CD8-positive, alpha-beta T cell (primary cell): ENCODE measurements at regions of chr20 and their contacts with region 1.

Region 1: GRCh38 chr20:44532259-44532980 is 10.6 kb upstream of the SERINC3 start:
- DNase-seq: no peak
- ATAC-seq: peak; percentile 13
- H3K4me3 ChIP-seq: peak overlapping the region; percentile 53 to 69
- H3K4me3 Mint-ChIP-seq: no peak overlapping the region
- H3K27ac ChIP-seq: peak overlapping the region; percentile 31 to 66
- H3K27ac Mint-ChIP-seq: no peak overlapping the region
- H3K4me1 ChIP-seq: peaks cover 28% of the 10 kb centered on the region
- H3K4me1 Mint-ChIP-seq: peaks cover 7% of the 10 kb centered on the region
- H3K27me3 ChIP-seq: peaks cover 0 to 3% of the 10 kb centered on the region in 2 experiments
- H3K27me3 Mint-ChIP-seq: no peaks in the 10 kb centered on the region
- CTCF ChIP-seq: no peak

Region 2: DNA sequence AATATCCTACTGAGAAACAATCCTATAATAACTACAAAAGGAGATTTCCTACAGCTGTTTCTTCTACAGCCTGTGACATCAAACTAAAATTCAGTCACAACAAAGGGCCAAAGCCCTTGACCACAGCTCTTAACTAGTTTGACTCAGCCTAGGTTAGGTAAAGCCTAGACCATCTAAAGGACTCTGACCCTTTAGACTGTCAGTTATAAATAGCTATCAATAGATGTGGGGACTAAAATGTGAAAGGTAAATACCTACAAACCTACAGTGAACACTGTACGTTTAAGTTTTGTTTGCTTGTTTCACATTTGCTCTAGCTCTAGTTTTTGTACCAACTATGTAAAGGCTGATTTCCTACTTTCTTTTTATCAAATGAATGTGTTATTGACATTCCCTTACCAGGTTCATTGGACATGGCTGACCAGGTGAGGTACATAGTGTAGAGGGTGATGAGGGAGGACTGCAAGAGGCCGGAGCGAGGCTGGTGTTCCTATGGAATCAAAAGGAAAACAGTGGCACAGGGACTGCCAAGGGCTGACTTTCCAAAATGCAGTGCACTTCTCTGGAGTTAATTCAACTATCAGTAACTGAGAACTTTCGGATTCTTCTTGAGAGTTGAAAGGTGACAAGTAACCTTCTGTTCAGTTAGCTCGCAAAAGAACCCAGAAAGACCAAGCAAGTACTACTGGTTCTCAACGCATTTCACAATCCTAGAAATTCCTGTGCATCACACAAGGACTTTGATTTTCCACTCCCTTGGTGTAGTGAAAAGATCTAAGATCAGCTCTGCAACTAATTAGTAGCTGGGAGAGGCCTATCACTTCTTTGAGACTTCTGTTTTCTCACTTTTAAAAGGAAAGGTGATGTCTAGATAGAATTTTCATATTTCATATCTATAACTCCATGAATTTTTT is 27.8 kb before region 1 on chr20:
- CTCF ChIA-PET with region 1: no interaction called
- POLR2A ChIA-PET with region 1: no interaction called
- intact Hi-C with region 1: no loop called
- DNase-seq: no peak
- ATAC-seq: no peak
- H3K4me3 ChIP-seq: no peak overlapping the region
- H3K4me3 Mint-ChIP-seq: no peak overlapping the region
- H3K27ac ChIP-seq: no peak overlapping the region
- H3K27ac Mint-ChIP-seq: no peak overlapping the region
- H3K4me1 ChIP-seq: no peaks in the 10 kb centered on the region
- H3K4me1 Mint-ChIP-seq: no peaks in the 10 kb centered on the region
- H3K27me3 ChIP-seq: no peaks in the 10 kb centered on the region
- H3K27me3 Mint-ChIP-seq: no peaks in the 10 kb centered on the region
- CTCF ChIP-seq: no peak

Region 3: DNA sequence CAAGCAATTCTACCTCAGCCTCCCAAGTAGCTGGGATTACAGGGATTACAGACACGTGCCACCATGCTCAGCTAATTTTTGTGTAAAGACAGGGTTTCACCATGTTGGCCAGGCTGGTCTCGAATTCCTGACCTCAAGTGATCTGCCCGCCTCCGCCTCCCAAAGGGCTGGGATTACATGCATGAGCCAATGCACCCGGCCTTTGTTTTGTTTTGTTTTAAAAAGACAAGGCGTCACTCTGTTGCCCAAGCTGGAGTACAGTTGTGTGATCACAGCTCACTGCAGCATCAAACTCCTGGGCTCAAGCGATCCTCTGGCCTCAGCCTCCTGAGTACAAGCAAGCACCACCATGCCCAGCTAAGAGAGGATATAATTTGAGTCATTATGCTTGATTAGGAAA is 15.9 kb before region 1 on chr20:
- CTCF ChIA-PET with region 1: no interaction called
- POLR2A ChIA-PET with region 1: interaction called, 7 read pairs
- intact Hi-C with region 1: loop called in 1 of 2 experiments (anchors 2 kb)
- DNase-seq: no peak
- ATAC-seq: no peak
- H3K4me3 ChIP-seq: no peak overlapping the region
- H3K4me3 Mint-ChIP-seq: no peak overlapping the region
- H3K27ac ChIP-seq: no peak overlapping the region
- H3K27ac Mint-ChIP-seq: peak overlapping the region; percentile 85
- H3K4me1 ChIP-seq: peaks cover 54% of the 10 kb centered on the region
- H3K4me1 Mint-ChIP-seq: peaks cover 73% of the 10 kb centered on the region
- H3K27me3 ChIP-seq: no peaks in the 10 kb centered on the region
- H3K27me3 Mint-ChIP-seq: no peaks in the 10 kb centered on the region
- CTCF ChIP-seq: no peak